WTC11 (cell line): ENCODE measurements at regions of chr16 and their contacts with region 1.

Region 1: GRCh38 chr16:75198135-75198600 is 8.8 kb downstream of the CTRB2 start:
- DNase-seq: no peak
- ATAC-seq: no peak; the same call in 1 of the 2 replicates
- H3K4me3 Mint-ChIP-seq: no peak overlapping the region
- H3K27ac Mint-ChIP-seq: no peak overlapping the region
- H3K4me1 Mint-ChIP-seq: peaks cover 9% of the 10 kb centered on the region
- H3K27me3 Mint-ChIP-seq: no peaks in the 10 kb centered on the region; the same call in 1 of the 2 replicates
- CTCF ChIP-seq: no peak

Region 2: GRCh38 chr16:74998481-74999218 is 199.5 kb before region 1 on chr16 and contains the start of gene ZNRF1:
- CTCF ChIA-PET with region 1: interaction called, 14 read pairs
- POLR2A ChIA-PET with region 1: no interaction called
- DNase-seq: peak; percentile 91
- ATAC-seq: peak; percentile 74
- H3K4me3 Mint-ChIP-seq: peak within 1 kb of the TSS; percentile 85
- H3K27ac Mint-ChIP-seq: peak within 1 kb of the TSS; percentile 59
- H3K4me1 Mint-ChIP-seq: peaks cover 45% of the 10 kb centered on the region
- H3K27me3 Mint-ChIP-seq: peaks cover 5% of the 10 kb centered on the region
- CTCF ChIP-seq: peak; percentile 51; the same call in 1 of the 2 replicates
- total RNA-seq, gene ZNRF1: 44.3 to 47.6 TPM (median 46.5 TPM) in 3 replicates

Region 3: DNA sequence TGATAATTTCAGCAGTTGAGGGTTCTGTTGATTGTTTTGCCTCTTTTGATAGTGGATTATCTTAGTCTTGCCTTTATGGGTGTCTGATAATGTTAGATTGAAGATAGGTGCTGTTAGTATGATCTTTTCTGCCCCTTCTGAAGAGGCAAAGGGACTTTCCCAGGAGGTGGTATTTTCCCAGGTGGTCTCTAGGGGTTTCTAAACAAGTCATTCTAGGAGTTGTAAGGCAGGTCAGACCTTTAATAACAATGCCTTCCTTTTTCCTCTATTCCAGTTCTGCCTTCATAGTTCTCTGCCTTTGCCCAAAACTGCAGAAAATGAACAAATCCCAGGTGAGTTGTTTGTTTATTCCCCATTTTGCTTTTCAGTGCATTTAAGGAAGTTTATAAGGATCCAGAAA is 45.5 kb before region 1 on chr16:
- CTCF ChIA-PET with region 1: no interaction called
- POLR2A ChIA-PET with region 1: no interaction called
- DNase-seq: no peak
- ATAC-seq: no peak
- H3K4me3 Mint-ChIP-seq: no peak overlapping the region
- H3K27ac Mint-ChIP-seq: no peak overlapping the region; the same call in 1 of the 2 replicates
- H3K4me1 Mint-ChIP-seq: peaks cover 4% of the 10 kb centered on the region
- H3K27me3 Mint-ChIP-seq: no peaks in the 10 kb centered on the region
- CTCF ChIP-seq: no peak

Region 4: DNA sequence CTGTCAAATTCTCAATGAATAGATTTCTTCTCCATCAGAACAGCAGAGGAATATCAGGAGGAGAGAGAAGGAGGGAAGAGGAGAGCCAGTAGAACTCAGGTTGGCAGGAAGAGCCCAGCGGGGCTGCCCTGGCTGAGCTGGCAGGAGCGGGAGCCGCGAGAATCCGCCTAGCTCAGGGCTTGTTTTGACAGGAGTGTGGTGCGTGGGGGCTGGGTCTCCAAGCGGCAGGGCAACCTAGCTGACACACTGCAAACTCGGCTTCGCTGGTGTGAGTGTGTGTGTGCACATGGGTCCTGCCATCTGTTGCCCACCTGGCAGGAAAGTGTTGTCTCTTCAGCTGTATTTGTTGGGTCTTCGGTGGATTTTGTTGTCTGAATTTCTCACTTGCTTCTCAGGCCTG is 81.1 kb after region 1 on chr16:
- CTCF ChIA-PET with region 1: interaction called, 11 read pairs
- POLR2A ChIA-PET with region 1: no interaction called
- DNase-seq: no peak
- ATAC-seq: peak; percentile 71
- H3K4me3 Mint-ChIP-seq: no peak overlapping the region
- H3K27ac Mint-ChIP-seq: peak overlapping the region; percentile 58; the same call in 1 of the 2 replicates
- H3K4me1 Mint-ChIP-seq: no peaks in the 10 kb centered on the region; the same call in 1 of the 2 replicates
- H3K27me3 Mint-ChIP-seq: no peaks in the 10 kb centered on the region
- CTCF ChIP-seq: no peak

Region 5: GRCh38 chr16:75385507-75386152 is 187.5 kb after region 1 on chr16:
- CTCF ChIA-PET with region 1: interaction called, 47 read pairs
- POLR2A ChIA-PET with region 1: interaction called, 3 read pairs
- DNase-seq: no peak
- ATAC-seq: peak; percentile 28; the same call in 1 of the 2 replicates
- H3K4me3 Mint-ChIP-seq: no peak overlapping the region
- H3K27ac Mint-ChIP-seq: peak overlapping the region; percentile 5; the same call in 1 of the 2 replicates
- H3K4me1 Mint-ChIP-seq: no peaks in the 10 kb centered on the region
- H3K27me3 Mint-ChIP-seq: no peaks in the 10 kb centered on the region
- CTCF ChIP-seq: peak; percentile 52

Region 6: DNA sequence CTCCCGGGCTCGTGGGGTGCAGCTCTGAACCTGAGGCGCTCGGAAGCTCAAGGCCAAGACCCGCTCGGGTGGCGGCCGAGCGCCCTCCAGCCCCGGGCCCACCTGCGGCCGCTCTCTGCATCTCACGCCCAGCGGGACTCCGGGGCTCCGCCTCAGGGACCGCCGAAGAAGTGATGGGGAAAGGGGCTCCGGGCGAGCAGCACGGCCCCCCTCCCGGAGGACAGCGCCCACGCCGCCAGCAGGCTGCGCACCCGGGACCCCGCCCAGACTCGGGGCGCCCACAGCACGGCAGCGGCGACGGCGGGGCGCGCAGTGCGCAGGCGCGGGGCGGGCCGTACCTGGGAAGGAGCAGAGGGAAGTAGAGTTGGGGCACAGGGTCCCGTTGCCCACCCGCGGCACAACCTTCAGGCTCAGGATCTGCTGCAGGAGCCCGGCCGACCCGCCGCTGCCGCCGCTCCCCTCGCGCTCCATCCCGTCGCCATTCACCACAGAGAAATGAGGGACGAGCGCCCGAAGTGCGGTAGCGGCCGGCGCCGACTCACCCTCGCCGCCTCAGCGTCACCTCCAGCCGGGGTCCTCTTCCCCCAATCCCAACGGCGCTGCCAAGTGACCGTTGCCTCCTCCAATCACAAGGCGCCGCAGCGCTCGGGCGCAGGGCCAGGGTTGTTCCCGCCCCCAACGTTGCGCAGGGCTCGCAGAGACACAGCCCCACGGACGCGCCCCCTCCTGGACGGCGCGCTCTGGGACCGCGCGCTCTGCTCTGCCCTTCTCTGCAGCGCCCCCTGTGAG is 266.2 kb after region 1 on chr16 and contains the start of gene TMEM170A:
- CTCF ChIA-PET with region 1: interaction called, 12 read pairs
- POLR2A ChIA-PET with region 1: no interaction called
- DNase-seq: peak; percentile 100
- ATAC-seq: peak; percentile 97
- H3K4me3 Mint-ChIP-seq: peak within 1 kb of the TSS; percentile 89
- H3K27ac Mint-ChIP-seq: peak within 1 kb of the TSS; percentile 84
- H3K4me1 Mint-ChIP-seq: peaks cover 34% of the 10 kb centered on the region
- H3K27me3 Mint-ChIP-seq: no peaks in the 10 kb centered on the region
- CTCF ChIP-seq: peak; percentile 100
- total RNA-seq, gene TMEM170A: 45.6 to 53.4 TPM (median 52.0 TPM) in 3 replicates